Lower leg skin (tissue), 4 donors: ENCODE measurements at regions of chr18 and their contacts with region 1.

Region 1: DNA sequence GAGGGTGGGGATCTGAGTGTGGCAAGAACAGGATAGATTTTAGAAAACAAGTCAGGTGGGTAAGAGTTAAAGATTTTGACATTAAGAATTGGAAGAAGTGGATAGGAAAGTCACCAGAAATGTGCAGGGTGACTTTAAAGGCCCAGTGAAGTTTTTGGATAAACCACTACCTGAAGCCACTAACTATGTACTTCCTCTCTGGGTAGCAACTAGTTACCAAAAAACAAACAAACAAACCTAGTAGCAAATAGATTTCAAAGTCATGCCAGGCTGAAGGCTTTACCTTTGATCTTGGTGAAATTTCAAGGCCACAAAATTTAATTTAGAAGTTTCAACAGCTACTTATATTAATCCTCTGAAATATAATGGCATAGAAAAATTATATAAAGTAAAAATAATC is 42.5 kb downstream of the PSMA8 start:
- DNase-seq: no peak
- H3K4me3 ChIP-seq: no peak overlapping the region
- CTCF ChIP-seq: no peak
- POLR2A ChIP-seq: no peak

Region 2: DNA sequence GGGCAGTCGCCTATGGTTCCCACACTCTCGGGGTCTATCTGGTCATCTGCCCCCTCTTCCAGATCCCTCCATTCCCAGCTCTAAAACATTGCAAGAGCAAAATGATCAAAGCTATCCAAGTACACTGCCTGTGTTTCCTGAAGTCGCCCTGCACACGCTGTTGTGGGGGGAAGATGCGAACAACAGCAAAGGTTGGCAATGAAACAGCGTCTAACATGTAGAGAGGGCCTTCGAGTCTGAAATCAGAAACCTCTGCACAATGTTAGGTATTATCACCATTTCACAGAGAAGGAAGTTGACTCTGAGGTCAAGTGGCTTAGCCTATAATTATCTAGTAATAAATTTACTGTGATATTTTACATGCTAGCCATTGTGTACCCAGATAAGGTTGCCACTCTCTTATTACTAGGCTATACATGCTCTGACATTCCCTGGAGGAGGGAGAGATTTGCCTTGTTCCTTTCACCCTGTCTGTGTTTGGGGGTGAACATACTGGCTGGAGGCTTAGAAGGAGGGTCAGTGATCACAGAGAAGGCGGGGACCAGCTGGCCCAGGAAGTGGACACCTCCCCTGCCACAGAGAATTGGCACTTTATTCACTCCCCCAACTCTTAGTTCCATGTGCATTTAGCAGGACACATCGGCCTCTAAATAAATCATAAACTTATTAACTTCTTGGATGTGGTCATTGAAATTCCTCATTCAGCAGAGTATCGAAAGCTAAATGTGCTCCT is 335.4 kb after region 1 on chr18:
- intact Hi-C with region 1: loop called (anchors 5 kb)
- DNase-seq: no peak
- H3K4me3 ChIP-seq: no peak overlapping the region
- CTCF ChIP-seq: no peak
- POLR2A ChIP-seq: no peak